OCI-LY7 (cell line): ENCODE measurements at regions of chr17 and their contacts with region 1.

Region 1: GRCh38 chr17:69733171-69734012 is 318.9 kb downstream of the MAP2K6 start:
- DNase-seq: peak; percentile 30
- H3K4me3 ChIP-seq: no peak overlapping the region
- H3K27ac ChIP-seq: no peak overlapping the region
- H3K4me1 ChIP-seq: no peaks in the 10 kb centered on the region
- CTCF ChIP-seq: no peak

Region 2: GRCh38 chr17:69749911-69750310 is 16.5 kb after region 1 on chr17:
- CTCF ChIA-PET with region 1: no interaction called
- POLR2A ChIA-PET with region 1: interaction called, 10 read pairs
- intact Hi-C with region 1: no loop called
- DNase-seq: no peak
- H3K4me3 ChIP-seq: no peak overlapping the region
- H3K27ac ChIP-seq: no peak overlapping the region
- H3K4me1 ChIP-seq: no peaks in the 10 kb centered on the region
- CTCF ChIP-seq: no peak